WTC11 (cell line): ENCODE measurements at regions of chr5 and their contacts with region 1.

Region 1: GRCh38 chr5:10030210-10030831 is 219.4 kb downstream of the ATPSCKMT start:
- DNase-seq: peak; percentile 59
- ATAC-seq: peak; percentile 94
- H3K4me3 Mint-ChIP-seq: no peak overlapping the region
- H3K27ac Mint-ChIP-seq: no peak overlapping the region
- H3K4me1 Mint-ChIP-seq: peaks cover 4% of the 10 kb centered on the region
- H3K27me3 Mint-ChIP-seq: no peaks in the 10 kb centered on the region
- CTCF ChIP-seq: no peak; the same call in none of the 2 replicates

Region 2: GRCh38 chr5:9774472-9775079 is 255.7 kb before region 1 on chr5:
- CTCF ChIA-PET with region 1: interaction called, 24 read pairs
- POLR2A ChIA-PET with region 1: no interaction called
- DNase-seq: peak; percentile 27
- ATAC-seq: peak; percentile 85
- H3K4me3 Mint-ChIP-seq: no peak overlapping the region
- H3K27ac Mint-ChIP-seq: no peak overlapping the region
- H3K4me1 Mint-ChIP-seq: no peaks in the 10 kb centered on the region
- H3K27me3 Mint-ChIP-seq: no peaks in the 10 kb centered on the region
- CTCF ChIP-seq: no peak

Region 3: GRCh38 chr5:9834871-9835770 is 195.2 kb before region 1 on chr5:
- CTCF ChIA-PET with region 1: interaction called, 17 read pairs
- POLR2A ChIA-PET with region 1: no interaction called
- DNase-seq: no peak
- ATAC-seq: peak; percentile 41
- H3K4me3 Mint-ChIP-seq: no peak overlapping the region
- H3K27ac Mint-ChIP-seq: peak overlapping the region; percentile 28; the same call in 1 of the 2 replicates
- H3K4me1 Mint-ChIP-seq: peaks cover 56% of the 10 kb centered on the region
- H3K27me3 Mint-ChIP-seq: no peaks in the 10 kb centered on the region
- CTCF ChIP-seq: no peak

Region 4: GRCh38 chr5:9898319-9898718 is 132.0 kb before region 1 on chr5:
- CTCF ChIA-PET with region 1: interaction called, 36 read pairs
- POLR2A ChIA-PET with region 1: no interaction called
- DNase-seq: peak; percentile 52
- ATAC-seq: peak; percentile 80
- H3K4me3 Mint-ChIP-seq: no peak overlapping the region
- H3K27ac Mint-ChIP-seq: no peak overlapping the region
- H3K4me1 Mint-ChIP-seq: peaks cover 28% of the 10 kb centered on the region
- H3K27me3 Mint-ChIP-seq: no peaks in the 10 kb centered on the region; the same call in 1 of the 2 replicates
- CTCF ChIP-seq: no peak

Region 5: DNA sequence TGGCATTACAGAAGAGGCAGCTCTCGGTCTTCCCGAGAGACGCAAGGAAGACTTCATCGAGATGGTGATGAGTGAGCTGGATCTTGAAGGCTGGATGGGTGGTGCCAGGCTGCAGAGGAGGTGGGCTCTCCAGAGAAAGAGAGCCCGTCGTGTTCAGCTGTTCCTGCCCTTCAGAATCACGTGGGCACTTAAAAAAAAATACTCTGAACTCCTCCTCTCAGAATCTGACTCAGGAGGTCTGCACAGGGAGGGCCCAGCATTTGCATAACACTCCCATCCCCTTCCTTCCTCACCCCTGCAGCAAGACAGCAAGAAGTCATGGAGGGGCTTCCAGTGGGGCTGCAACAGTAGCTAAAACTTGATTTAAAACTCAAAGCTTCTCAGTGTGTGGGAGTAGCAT is 16.4 kb after region 1 on chr5:
- CTCF ChIA-PET with region 1: interaction called, 12 read pairs
- POLR2A ChIA-PET with region 1: no interaction called
- DNase-seq: no peak
- ATAC-seq: peak; percentile 63
- H3K4me3 Mint-ChIP-seq: no peak overlapping the region
- H3K27ac Mint-ChIP-seq: no peak overlapping the region
- H3K4me1 Mint-ChIP-seq: peaks cover 11% of the 10 kb centered on the region
- H3K27me3 Mint-ChIP-seq: peaks cover 5% of the 10 kb centered on the region; the same call in 1 of the 2 replicates
- CTCF ChIP-seq: no peak

Region 6: DNA sequence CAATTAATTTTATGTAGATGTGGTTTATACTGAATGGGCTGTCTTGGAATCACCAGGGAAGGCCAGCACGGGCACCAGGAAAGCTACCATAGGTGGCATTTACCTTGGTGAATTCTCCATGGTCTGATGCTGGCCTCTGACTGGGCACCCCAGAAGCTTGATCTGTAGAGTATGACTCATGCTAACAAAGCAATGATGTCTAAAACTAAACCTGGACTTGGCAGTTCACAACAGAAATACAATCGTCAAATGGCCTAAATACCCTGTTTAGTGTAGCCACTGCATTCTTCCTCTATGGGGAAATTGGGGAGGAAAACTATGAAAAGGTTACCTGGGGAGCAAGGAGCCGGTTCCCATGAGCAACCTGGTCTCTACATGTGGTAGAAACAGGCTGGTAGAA is 121.3 kb after region 1 on chr5:
- CTCF ChIA-PET with region 1: no interaction called
- POLR2A ChIA-PET with region 1: no interaction called
- DNase-seq: no peak
- ATAC-seq: no peak
- H3K4me3 Mint-ChIP-seq: no peak overlapping the region
- H3K27ac Mint-ChIP-seq: no peak overlapping the region
- H3K4me1 Mint-ChIP-seq: peaks cover 20% of the 10 kb centered on the region
- H3K27me3 Mint-ChIP-seq: no peaks in the 10 kb centered on the region
- CTCF ChIP-seq: no peak